IMR-90 (cell line): ENCODE measurements at regions of chr16 and their contacts with region 1.

Region 1: DNA sequence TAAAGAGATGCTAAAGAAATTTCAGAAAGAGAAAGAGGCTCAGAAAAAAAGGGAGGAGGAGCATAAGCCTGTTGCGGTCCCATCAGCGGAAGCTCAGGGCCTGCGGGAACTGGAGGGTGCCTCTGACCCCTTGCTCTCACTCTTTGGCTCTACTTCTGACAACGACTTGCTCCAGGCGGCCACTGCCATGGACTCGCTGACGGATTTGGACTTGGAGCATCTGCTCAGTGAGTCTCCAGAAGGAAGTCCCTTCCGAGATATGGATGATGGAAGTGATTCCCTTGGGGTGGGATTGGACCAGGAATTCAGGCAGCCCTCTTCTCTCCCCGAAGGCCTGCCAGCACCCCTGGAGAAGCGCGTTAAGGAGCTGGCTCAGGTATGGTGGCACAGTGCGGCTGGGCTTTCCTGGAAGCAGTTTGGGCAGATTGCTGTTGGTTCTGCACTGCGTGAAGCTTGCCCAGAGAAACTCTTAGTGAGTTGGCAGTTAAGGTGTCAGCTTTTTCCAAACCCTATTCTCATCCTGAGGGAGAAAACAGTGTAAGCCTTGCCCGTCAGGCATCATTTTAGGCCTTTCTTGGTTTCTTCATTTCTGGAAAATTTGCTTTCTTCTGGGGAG is 13.6 kb downstream of the UBN1 start:
- DNase-seq: no peak
- ATAC-seq: no peak
- H3K4me3 ChIP-seq: no peak overlapping the region
- H3K27ac ChIP-seq: no peak overlapping the region
- H3K4me1 ChIP-seq: no peaks in the 10 kb centered on the region; the same call in 1 of the 2 replicates
- H3K27me3 ChIP-seq: no peaks in the 10 kb centered on the region
- CTCF ChIP-seq: no peak
- POLR2A ChIP-seq: no peak
- RAD21 ChIP-seq: no peak

Region 2: DNA sequence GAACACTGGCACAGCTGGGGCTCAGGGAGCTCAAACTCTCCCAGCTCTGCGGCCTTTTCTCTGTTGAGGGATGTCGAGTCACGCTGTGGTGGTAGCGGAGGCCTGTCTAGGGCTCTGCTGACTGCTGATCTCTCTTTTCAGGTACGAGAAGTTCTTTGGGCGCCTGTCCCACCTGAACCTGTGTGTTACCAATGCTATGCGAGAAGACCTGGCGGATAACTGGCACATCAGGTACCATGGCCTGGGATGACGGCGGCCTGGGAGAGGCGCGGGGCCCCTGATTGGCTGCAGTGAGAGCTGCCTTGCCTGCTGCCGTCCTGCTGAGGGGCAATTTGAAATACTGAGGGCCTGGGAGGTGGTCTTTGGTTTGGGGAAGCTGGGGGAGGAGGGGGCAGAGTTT is 216.5 kb after region 1 on chr16:
- CTCF ChIA-PET with region 1: no interaction called
- POLR2A ChIA-PET with region 1: interaction called, 13 read pairs
- dilution Hi-C with region 1: no loop called
- in situ Hi-C with region 1: no loop called
- intact Hi-C with region 1: no loop called
- DNase-seq: no peak
- ATAC-seq: no peak
- H3K4me3 ChIP-seq: no peak overlapping the region
- H3K27ac ChIP-seq: no peak overlapping the region
- H3K4me1 ChIP-seq: peaks cover 3% of the 10 kb centered on the region; the same call in 1 of the 2 replicates
- H3K27me3 ChIP-seq: no peaks in the 10 kb centered on the region
- CTCF ChIP-seq: no peak
- POLR2A ChIP-seq: no peak
- RAD21 ChIP-seq: no peak